Activated CD4-positive, alpha-beta memory T cell treated with anti-CD3 and anti-CD28 coated beads, Interleukin-2, amount 10 ng/mL, durations not matched to agents 7 days and 5 days (primary cell): ENCODE measurements at regions of chr6 and their contacts with region 1.

Region 1: DNA sequence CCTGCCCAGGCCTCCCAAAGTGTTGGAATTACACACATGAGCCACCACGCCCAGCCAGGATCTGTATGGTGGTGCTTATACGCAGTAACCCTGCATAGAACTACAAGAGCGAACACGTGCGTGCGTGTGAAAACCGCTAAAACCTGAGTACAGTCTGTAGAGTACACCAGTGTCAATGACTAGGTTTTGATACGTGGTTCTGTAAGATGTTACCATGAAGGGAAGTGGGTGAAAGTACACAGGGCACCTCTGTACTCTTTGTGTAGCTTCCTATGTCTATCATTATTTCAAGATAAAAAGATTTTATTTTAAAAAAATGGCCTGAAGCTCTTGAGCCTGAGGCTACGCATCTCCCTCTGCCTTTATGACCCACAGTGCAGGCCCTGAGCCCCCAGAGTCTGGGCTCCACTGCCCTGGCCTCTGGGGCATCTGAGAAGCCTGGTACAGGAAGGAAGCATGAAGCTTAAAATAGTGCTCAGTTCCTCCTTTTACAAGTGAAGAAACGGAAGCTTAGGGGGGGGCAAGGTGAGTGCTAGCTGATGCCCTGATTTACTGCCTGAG is 21.6 kb downstream of the LY86 start:
- DNase-seq: peak; percentile 74
- H3K4me3 Mint-ChIP-seq: no peak overlapping the region
- H3K27ac Mint-ChIP-seq: peak overlapping the region; percentile 85
- H3K4me1 Mint-ChIP-seq: peaks cover 63% of the 10 kb centered on the region
- H3K27me3 Mint-ChIP-seq: no peaks in the 10 kb centered on the region

Region 2: GRCh38 chr6:6591778-6592465 is 18.2 kb before region 1 on chr6:
- CTCF ChIA-PET with region 1: interaction called, 4 read pairs
- POLR2A ChIA-PET with region 1: interaction called, 42 read pairs
- DNase-seq: no peak
- H3K4me3 Mint-ChIP-seq: no peak overlapping the region
- H3K27ac Mint-ChIP-seq: peak overlapping the region; percentile 83
- H3K4me1 Mint-ChIP-seq: peaks cover 63% of the 10 kb centered on the region
- H3K27me3 Mint-ChIP-seq: peaks cover 1% of the 10 kb centered on the region

Region 3: GRCh38 chr6:6649824-6650349 is 39.8 kb after region 1 on chr6:
- CTCF ChIA-PET with region 1: interaction called, 4 read pairs
- POLR2A ChIA-PET with region 1: interaction called, 39 read pairs
- DNase-seq: no peak
- H3K4me3 Mint-ChIP-seq: no peak overlapping the region
- H3K27ac Mint-ChIP-seq: peak overlapping the region; percentile 34
- H3K4me1 Mint-ChIP-seq: peaks cover 56% of the 10 kb centered on the region
- H3K27me3 Mint-ChIP-seq: no peaks in the 10 kb centered on the region

Region 4: GRCh38 chr6:6654599-6655575 is 44.8 kb after region 1 on chr6:
- CTCF ChIA-PET with region 1: interaction called, 4 read pairs
- POLR2A ChIA-PET with region 1: interaction called, 39 read pairs
- DNase-seq: peak; percentile 74
- H3K4me3 Mint-ChIP-seq: peak overlapping the region; percentile 25
- H3K27ac Mint-ChIP-seq: peak overlapping the region; percentile 95
- H3K4me1 Mint-ChIP-seq: peaks cover 95% of the 10 kb centered on the region
- H3K27me3 Mint-ChIP-seq: no peaks in the 10 kb centered on the region

Region 5: DNA sequence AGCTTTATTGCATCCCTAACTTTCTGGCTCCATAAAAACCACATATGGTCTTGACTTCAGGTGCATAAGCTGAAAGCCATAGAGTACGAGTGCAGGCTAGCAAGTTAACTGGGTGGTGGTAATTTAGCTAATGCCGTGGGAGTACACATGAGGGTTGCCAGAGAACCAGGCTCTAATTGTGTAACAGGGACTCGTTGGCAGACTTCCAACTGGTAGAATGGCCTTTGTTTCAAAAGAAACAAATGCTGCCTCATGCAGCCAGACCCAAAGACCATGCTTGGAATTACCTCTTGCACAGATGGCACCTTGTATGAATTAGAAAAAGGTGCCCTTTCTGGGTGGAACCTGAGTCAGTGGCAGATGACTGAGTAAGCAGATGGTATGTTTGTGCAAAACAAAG is 51.6 kb after region 1 on chr6:
- CTCF ChIA-PET with region 1: interaction called, 3 read pairs
- POLR2A ChIA-PET with region 1: interaction called, 39 read pairs
- DNase-seq: no peak
- H3K4me3 Mint-ChIP-seq: no peak overlapping the region
- H3K27ac Mint-ChIP-seq: no peak overlapping the region
- H3K4me1 Mint-ChIP-seq: peaks cover 62% of the 10 kb centered on the region
- H3K27me3 Mint-ChIP-seq: peaks cover 8% of the 10 kb centered on the region